A549 (cell line): ENCODE measurements at regions of chr1 and their contacts with region 1.

Region 1: DNA sequence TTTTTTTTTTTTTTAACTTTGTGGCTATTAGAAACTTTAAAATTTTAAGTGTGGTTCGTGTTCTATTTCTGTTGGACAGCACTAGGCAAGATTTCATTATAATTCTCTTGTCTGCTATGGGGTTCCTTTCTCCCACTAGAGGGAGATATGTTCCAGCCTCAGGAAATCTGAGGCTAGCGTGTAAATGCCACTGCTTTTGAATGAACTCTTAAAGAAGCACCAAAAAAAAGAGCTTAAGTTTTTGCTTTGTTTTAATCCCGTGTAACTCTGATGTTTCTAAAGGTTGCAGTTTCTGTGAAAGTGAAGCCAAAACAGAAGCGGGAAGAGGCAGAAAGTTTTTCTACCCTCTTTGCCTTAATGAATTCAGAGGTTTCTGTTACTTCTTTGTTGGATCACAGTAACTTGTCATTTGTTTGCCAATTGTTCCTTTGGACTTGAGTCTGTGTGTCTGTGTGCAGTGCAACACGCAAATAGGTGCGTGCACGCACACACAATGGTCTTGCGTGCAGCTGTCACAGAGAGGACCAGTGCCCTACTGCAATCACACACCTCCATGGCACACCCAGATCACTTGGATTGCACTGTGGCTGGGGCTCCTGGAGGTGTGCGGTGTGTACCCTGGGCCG is 32.3 kb downstream of the HHAT start:
- DNase-seq: peak; percentile 45 to 71
- ATAC-seq: peak; percentile 89 to 95
- H3K4me3 ChIP-seq: no peak overlapping the region
- H3K27ac ChIP-seq: peak overlapping the region in 1 of 2 experiments; percentile 9; a peak in 1 of 6 replicates
- H3K4me1 ChIP-seq: no peaks in the 10 kb centered on the region
- CTCF ChIP-seq: peak; percentile 74
- EP300 ChIP-seq: no peak
- POLR2A ChIP-seq: no peak
- RAD21 ChIP-seq: peak; percentile 68 to 70

Region 2: GRCh38 chr1:210328746-210329503 is 32.0 kb before region 1 on chr1 and contains the start of gene HHAT:
- CTCF ChIA-PET with region 1: interaction called, 11 read pairs
- POLR2A ChIA-PET with region 1: no interaction called
- DNase-seq: peak; percentile 75 to 81
- ATAC-seq: peak; percentile 93 to 96
- H3K4me3 ChIP-seq: peak within 1 kb of the TSS; percentile 60
- H3K27ac ChIP-seq: peak within 1 kb of the TSS; percentile 87 to 94
- H3K4me1 ChIP-seq: peaks cover 17% of the 10 kb centered on the region; the same call in 2 of the 3 replicates
- CTCF ChIP-seq: no peak
- EP300 ChIP-seq: no peak
- POLR2A ChIP-seq: peak; percentile 49
- RAD21 ChIP-seq: no peak
- polyA plus RNA-seq, gene HHAT: 4.5 and 5.0 TPM in 2 replicates

Region 3: GRCh38 chr1:210400043-210400840 is 39.3 kb after region 1 on chr1:
- CTCF ChIA-PET with region 1: interaction called, 25 read pairs
- POLR2A ChIA-PET with region 1: no interaction called
- DNase-seq: peak; percentile 71 to 88
- ATAC-seq: peak; percentile 98 to 100
- H3K4me3 ChIP-seq: no peak overlapping the region
- H3K27ac ChIP-seq: no peak overlapping the region
- H3K4me1 ChIP-seq: no peaks in the 10 kb centered on the region; the same call in 2 of the 3 replicates
- CTCF ChIP-seq: peak; percentile 87
- EP300 ChIP-seq: no peak
- POLR2A ChIP-seq: no peak
- RAD21 ChIP-seq: peak; percentile 85 to 88